GM12878 (cell line): ENCODE measurements at regions of chr6 and their contacts with region 1.

Region 1: GRCh38 chr6:11414176-11414963 is 123.2 kb upstream of the TMEM170B start:
- DNase-seq: peak; percentile 72
- ATAC-seq: peak; percentile 79
- H3K4me3 ChIP-seq: no peak overlapping the region
- H3K27ac ChIP-seq: 0 out of 2 replicates have a peak overlapping the region, but pooled peaks have one; percentile 4
- H3K4me1 ChIP-seq: peaks cover 30% of the 10 kb centered on the region
- H3K27me3 ChIP-seq: no peaks in the 10 kb centered on the region
- CTCF ChIP-seq: no peak
- EP300 ChIP-seq: no peak
- POLR2A ChIP-seq: no peak
- RAD21 ChIP-seq: no peak

Region 2: GRCh38 chr6:11392778-11393507 is 21.4 kb before region 1 on chr6:
- CTCF ChIA-PET with region 1: interaction called, 4 read pairs
- POLR2A ChIA-PET with region 1: interaction called, 5 read pairs
- RAD21 ChIA-PET with region 1: interaction called, 7 read pairs
- SMC1A ChIA-PET with region 1: interaction called, 177 read pairs
- in situ Hi-C with region 1: no loop called
- intact Hi-C with region 1: no loop called
- DNase-seq: no peak
- ATAC-seq: no peak
- H3K4me3 ChIP-seq: no peak overlapping the region
- H3K27ac ChIP-seq: no peak overlapping the region
- H3K4me1 ChIP-seq: peaks cover 4% of the 10 kb centered on the region
- H3K27me3 ChIP-seq: no peaks in the 10 kb centered on the region
- CTCF ChIP-seq: no peak
- EP300 ChIP-seq: no peak
- POLR2A ChIP-seq: no peak
- RAD21 ChIP-seq: no peak

Region 3: GRCh38 chr6:11398451-11399326 is 15.7 kb before region 1 on chr6:
- CTCF ChIA-PET with region 1: interaction called, 7 read pairs
- POLR2A ChIA-PET with region 1: interaction called, 7 read pairs
- RAD21 ChIA-PET with region 1: interaction called, 7 read pairs
- SMC1A ChIA-PET with region 1: interaction called, 21 read pairs
- in situ Hi-C with region 1: no loop called
- intact Hi-C with region 1: no loop called
- DNase-seq: no peak
- ATAC-seq: no peak
- H3K4me3 ChIP-seq: no peak overlapping the region
- H3K27ac ChIP-seq: no peak overlapping the region
- H3K4me1 ChIP-seq: peaks cover 7% of the 10 kb centered on the region
- H3K27me3 ChIP-seq: no peaks in the 10 kb centered on the region
- CTCF ChIP-seq: no peak
- EP300 ChIP-seq: no peak
- POLR2A ChIP-seq: no peak
- RAD21 ChIP-seq: no peak

Region 4: GRCh38 chr6:11428895-11429294 is 14.5 kb after region 1 on chr6:
- CTCF ChIA-PET with region 1: interaction called, 10 read pairs
- POLR2A ChIA-PET with region 1: interaction called, 15 read pairs
- RAD21 ChIA-PET with region 1: interaction called, 33 read pairs
- SMC1A ChIA-PET with region 1: interaction called, 41 read pairs
- in situ Hi-C with region 1: no loop called
- intact Hi-C with region 1: no loop called
- DNase-seq: peak; percentile 83
- ATAC-seq: peak; percentile 81
- H3K4me3 ChIP-seq: no peak overlapping the region
- H3K27ac ChIP-seq: peak overlapping the region; percentile 51; the same call in 1 of the 2 replicates
- H3K4me1 ChIP-seq: peaks cover 33% of the 10 kb centered on the region
- H3K27me3 ChIP-seq: no peaks in the 10 kb centered on the region
- CTCF ChIP-seq: no peak
- EP300 ChIP-seq: peak in 1 of 2 experiments; percentile 65; a peak in 2 of 4 replicates
- POLR2A ChIP-seq: no peak
- RAD21 ChIP-seq: no peak

Region 5: DNA sequence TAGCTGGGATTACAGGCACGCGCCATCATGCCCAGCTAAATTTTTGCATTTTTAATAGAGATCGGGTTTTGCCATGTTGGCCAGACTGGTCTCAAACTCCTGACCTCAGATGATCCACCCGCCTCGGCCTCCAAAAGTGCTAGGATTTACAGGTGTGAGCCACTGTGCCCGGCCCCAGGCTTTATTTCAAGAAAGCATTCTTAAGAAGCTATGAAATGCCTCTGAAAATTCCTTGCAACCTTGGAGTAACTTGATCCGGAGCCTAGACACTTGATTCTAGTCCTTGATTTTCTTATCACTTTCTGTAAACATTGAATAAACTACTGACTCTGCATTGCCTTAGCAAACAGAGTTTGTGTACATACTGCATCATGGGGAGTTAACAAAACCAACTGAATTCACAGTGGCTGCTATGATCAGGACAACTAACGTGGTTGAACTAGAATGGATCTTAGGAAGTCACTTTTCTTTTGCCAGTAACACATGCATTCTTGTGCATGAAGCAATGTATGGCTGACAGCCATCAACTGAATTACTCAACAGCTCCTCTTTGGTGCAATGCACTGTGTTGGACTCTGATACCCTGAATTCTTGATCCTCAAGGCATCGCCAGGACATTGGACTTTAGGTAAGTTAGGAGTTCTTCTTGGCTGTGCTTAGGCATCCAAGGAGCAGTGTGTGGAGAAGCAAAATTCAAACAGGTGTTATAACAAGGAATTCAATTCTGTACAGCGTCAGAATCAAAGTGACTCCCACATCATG is 20.4 kb after region 1 on chr6:
- CTCF ChIA-PET with region 1: interaction called, 10 read pairs
- POLR2A ChIA-PET with region 1: interaction called, 15 read pairs
- RAD21 ChIA-PET with region 1: interaction called, 33 read pairs
- SMC1A ChIA-PET with region 1: interaction called, 41 read pairs
- in situ Hi-C with region 1: no loop called
- intact Hi-C with region 1: no loop called
- DNase-seq: no peak
- ATAC-seq: no peak
- H3K4me3 ChIP-seq: no peak overlapping the region
- H3K27ac ChIP-seq: no peak overlapping the region
- H3K4me1 ChIP-seq: peaks cover 13% of the 10 kb centered on the region
- H3K27me3 ChIP-seq: no peaks in the 10 kb centered on the region
- CTCF ChIP-seq: no peak
- EP300 ChIP-seq: no peak
- POLR2A ChIP-seq: no peak
- RAD21 ChIP-seq: no peak

Region 6: DNA sequence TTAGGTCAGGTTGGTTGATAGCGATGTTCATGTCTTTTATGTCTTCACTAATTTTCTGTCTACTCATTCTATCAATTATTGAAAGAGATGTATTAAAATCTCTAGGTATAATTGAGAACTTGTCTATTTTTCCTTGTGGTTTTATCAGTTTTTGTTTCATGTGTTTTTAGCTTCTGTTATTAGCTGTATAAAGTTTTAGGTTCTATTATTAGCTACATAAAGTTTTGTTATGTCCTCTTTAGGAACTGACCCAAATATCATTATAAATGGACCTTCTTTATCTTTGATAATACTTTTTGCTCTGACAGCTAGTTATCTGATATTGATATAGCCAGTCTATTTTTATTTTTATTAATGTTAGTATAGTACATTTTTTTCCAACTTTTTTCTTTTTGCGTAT is 30.8 kb after region 1 on chr6:
- CTCF ChIA-PET with region 1: no interaction called
- POLR2A ChIA-PET with region 1: no interaction called
- RAD21 ChIA-PET with region 1: interaction called, 8 read pairs
- SMC1A ChIA-PET with region 1: interaction called, 19 read pairs
- in situ Hi-C with region 1: no loop called
- intact Hi-C with region 1: no loop called
- DNase-seq: no peak
- ATAC-seq: peak; percentile 23
- H3K4me3 ChIP-seq: no peak overlapping the region
- H3K27ac ChIP-seq: peak overlapping the region; percentile 27
- H3K4me1 ChIP-seq: peaks cover 3% of the 10 kb centered on the region; the same call in 1 of the 2 replicates
- H3K27me3 ChIP-seq: no peaks in the 10 kb centered on the region
- CTCF ChIP-seq: no peak
- EP300 ChIP-seq: no peak
- POLR2A ChIP-seq: no peak
- RAD21 ChIP-seq: no peak

Region 7: GRCh38 chr6:11467364-11467763 is 53.0 kb after region 1 on chr6:
- CTCF ChIA-PET with region 1: no interaction called
- POLR2A ChIA-PET with region 1: interaction called, 4 read pairs
- RAD21 ChIA-PET with region 1: interaction called, 3 read pairs
- SMC1A ChIA-PET with region 1: interaction called, 20 read pairs
- in situ Hi-C with region 1: no loop called
- intact Hi-C with region 1: no loop called
- DNase-seq: peak; percentile 88
- ATAC-seq: peak; percentile 82
- H3K4me3 ChIP-seq: no peak overlapping the region
- H3K27ac ChIP-seq: peak overlapping the region; percentile 91
- H3K4me1 ChIP-seq: peaks cover 30% of the 10 kb centered on the region
- H3K27me3 ChIP-seq: no peaks in the 10 kb centered on the region
- CTCF ChIP-seq: no peak
- EP300 ChIP-seq: no peak
- POLR2A ChIP-seq: no peak
- RAD21 ChIP-seq: peak; percentile 25